ENCODE measurements at regions of chr11 and their contacts with region 1.

Region 1: DNA sequence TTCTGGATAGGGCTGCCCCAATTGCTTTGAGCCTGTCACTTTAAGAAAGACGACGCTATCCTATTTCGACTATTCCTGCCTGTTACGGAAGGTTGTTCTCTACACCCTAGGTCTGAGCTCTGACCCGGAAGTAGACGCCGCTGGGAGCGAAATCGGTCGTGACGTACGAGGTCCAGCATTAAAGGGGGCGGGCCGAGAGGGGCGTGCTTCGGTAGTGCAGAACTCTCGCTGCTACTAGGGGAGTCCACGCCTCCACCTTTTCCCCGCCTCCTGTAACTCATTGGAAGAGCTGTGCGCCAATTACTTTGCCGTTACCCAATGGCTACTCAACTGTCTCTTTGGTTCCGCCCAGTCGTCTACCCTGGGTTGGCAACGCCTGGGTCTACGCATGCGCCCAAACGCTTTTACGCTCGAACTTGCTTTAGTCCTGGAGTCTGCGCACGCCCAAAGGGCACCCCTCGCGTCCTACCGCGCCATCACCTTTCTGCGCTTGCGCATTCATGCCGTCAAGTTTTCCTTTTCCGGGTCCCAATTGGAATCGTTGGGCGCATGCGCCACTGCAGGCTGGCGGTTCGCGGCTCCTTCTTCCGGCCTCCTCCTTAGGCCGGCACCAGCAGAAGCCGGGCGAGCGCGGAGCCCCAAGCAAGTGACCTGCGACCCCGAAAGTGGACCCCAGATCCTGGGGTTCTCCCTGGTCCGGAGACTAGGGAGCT is at the start of gene PCNX3:
- DNase-seq: peak; percentile 100
- H3K4me3 ChIP-seq: peak within 1 kb of the TSS; percentile 74 to 96
- H3K4me3 Mint-ChIP-seq: peak within 1 kb of the TSS; percentile 95 to 99 (median 96)
- H3K27ac ChIP-seq: peak within 1 kb of the TSS; percentile 96
- H3K27ac Mint-ChIP-seq: peak within 1 kb of the TSS; percentile 90 to 100 (median 99)
- H3K4me1 ChIP-seq: peaks cover 46% of the 10 kb centered on the region
- H3K4me1 Mint-ChIP-seq: peaks cover 23 to 59% (median 46%) of the 10 kb centered on the region in 4 donors
- H3K27me3 ChIP-seq: no peaks in the 10 kb centered on the region
- H3K27me3 Mint-ChIP-seq: no peaks in the 10 kb centered on the region
- total RNA-seq, gene PCNX3: 63.3 to 66.3 TPM

Region 2: GRCh38 chr11:65418711-65419459 is 196.5 kb before region 1 on chr11:
- CTCF ChIA-PET with region 1: no interaction called
- POLR2A ChIA-PET with region 1: interaction called, 22 read pairs
- intact Hi-C with region 1: no loop called
- DNase-seq: peak; percentile 64 to 87 (median 70)
- H3K4me3 ChIP-seq: peak overlapping the region; percentile 86 to 95
- H3K4me3 Mint-ChIP-seq: peak overlapping the region; percentile 92 to 97 (median 95)
- H3K27ac ChIP-seq: peak overlapping the region; percentile 98
- H3K27ac Mint-ChIP-seq: peak overlapping the region; percentile 93 to 100 (median 97)
- H3K4me1 ChIP-seq: peaks cover 57% of the 10 kb centered on the region
- H3K4me1 Mint-ChIP-seq: peaks cover 30 to 72% (median 42%) of the 10 kb centered on the region in 4 donors
- H3K27me3 ChIP-seq: no peaks in the 10 kb centered on the region
- H3K27me3 Mint-ChIP-seq: peaks cover 0 to 4% of the 10 kb centered on the region in 2 donors

Region 3: DNA sequence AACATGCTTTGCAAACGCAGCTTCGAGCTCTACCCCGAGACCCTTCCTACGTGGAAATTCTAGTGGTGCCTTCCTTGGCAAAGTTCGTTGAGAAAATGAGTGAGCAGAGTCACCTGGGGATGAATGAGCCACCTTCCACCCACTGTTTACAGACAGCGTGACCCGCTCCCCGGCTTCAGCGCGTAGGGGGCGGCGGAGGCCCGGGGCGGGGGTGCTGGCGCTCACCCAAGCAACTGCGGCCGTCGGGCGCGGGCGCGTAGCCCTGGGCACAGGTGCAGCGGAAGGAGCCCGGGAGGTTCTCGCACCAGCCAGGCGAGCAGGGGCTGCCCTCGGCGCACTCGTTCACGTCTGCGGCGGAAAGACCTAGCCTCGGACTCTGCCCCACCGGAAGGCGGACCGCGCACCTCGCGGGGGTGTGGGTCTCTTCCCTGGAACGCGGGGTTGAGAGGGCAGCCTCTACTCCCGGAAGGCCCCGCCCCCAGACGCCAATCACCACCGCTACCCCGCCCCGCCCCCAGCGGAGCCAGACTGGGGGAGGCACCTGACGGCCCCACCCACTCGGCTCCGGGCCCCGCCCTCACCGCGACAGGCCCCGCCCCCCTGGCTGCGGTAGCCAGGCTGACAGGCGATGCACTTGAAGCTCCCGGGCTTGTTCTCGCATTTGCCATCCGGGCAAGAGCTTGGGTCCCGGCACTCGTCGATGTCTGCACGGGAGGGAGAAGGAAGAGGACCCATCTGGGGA is 69.0 kb before region 1 on chr11:
- CTCF ChIA-PET with region 1: interaction called, 7 read pairs
- POLR2A ChIA-PET with region 1: interaction called, 22 read pairs
- intact Hi-C with region 1: no loop called
- DNase-seq: peak; percentile 96 to 99 (median 97)
- H3K4me3 ChIP-seq: peak overlapping the region in 1 of 2 donors; percentile 41
- H3K4me3 Mint-ChIP-seq: peak overlapping the region; percentile 79 to 92 (median 80)
- H3K27ac ChIP-seq: peak overlapping the region; percentile 59
- H3K27ac Mint-ChIP-seq: peak overlapping the region; percentile 81 to 97 (median 94)
- H3K4me1 ChIP-seq: peaks cover 46% of the 10 kb centered on the region
- H3K4me1 Mint-ChIP-seq: peaks cover 31 to 65% (median 43%) of the 10 kb centered on the region in 4 donors
- H3K27me3 ChIP-seq: no peaks in the 10 kb centered on the region
- H3K27me3 Mint-ChIP-seq: no peaks in the 10 kb centered on the region

Region 4: GRCh38 chr11:65637794-65638317 is 22.5 kb after region 1 on chr11 and contains the start of gene SIPA1:
- CTCF ChIA-PET with region 1: interaction called, 3 read pairs
- POLR2A ChIA-PET with region 1: interaction called, 113 read pairs
- intact Hi-C with region 1: loop called (anchors 1 kb)
- DNase-seq: peak; percentile 63 to 85 (median 74)
- H3K4me3 ChIP-seq: peak within 1 kb of the TSS; percentile 72 to 86
- H3K4me3 Mint-ChIP-seq: peak within 1 kb of the TSS; percentile 90 to 98 (median 96)
- H3K27ac ChIP-seq: peak within 1 kb of the TSS; percentile 94
- H3K27ac Mint-ChIP-seq: peak within 1 kb of the TSS; percentile 97 to 100 (median 99)
- H3K4me1 ChIP-seq: peaks cover 71% of the 10 kb centered on the region
- H3K4me1 Mint-ChIP-seq: peaks cover 24 to 68% (median 46%) of the 10 kb centered on the region in 4 donors
- H3K27me3 ChIP-seq: no peaks in the 10 kb centered on the region
- H3K27me3 Mint-ChIP-seq: no peaks in the 10 kb centered on the region
- total RNA-seq, gene SIPA1: 150 to 169 TPM

Region 5: DNA sequence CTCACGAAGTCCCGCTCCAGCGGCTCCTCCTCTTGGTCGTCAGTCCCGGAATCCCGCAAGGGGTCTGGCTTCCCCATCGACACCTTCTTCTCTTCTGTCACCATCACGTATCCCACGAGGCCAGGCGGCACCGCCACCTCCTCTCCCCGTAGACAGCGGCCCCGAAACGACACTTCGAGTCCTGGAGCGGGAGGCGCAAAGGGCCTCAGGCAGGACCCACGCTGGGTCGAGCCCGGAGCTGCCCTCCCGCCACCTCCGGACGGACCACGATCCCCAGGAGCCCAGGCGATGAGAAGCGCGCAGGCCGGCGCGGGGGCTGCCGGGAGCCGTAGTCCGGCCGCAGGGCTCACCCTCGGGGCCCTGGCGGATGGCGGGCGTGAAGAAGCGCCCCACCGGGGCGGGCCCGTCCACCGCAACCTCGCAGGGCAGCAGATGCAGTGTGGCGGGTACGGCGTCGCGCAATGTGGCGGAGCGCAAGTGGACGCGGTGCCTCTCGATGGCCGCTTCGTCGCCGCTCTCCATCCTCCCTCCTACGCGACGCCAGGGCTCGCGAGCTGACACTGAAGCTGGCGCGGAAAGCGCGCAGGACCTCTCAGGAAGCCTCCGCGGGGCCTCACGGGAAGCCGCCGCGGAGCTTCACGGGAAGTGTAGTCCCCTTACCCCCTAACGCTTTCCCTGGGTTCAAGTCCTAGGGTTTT is 105.0 kb after region 1 on chr11 and contains the start of gene RNASEH2C:
- CTCF ChIA-PET with region 1: no interaction called
- POLR2A ChIA-PET with region 1: interaction called, 11 read pairs
- intact Hi-C with region 1: no loop called
- DNase-seq: peak; percentile 70 to 79 (median 76)
- H3K4me3 ChIP-seq: peak within 1 kb of the TSS; percentile 86 to 87
- H3K4me3 Mint-ChIP-seq: peak within 1 kb of the TSS; percentile 89 to 93 (median 91)
- H3K27ac ChIP-seq: peak within 1 kb of the TSS; percentile 68
- H3K27ac Mint-ChIP-seq: peak within 1 kb of the TSS; percentile 85 to 94 (median 92)
- H3K4me1 ChIP-seq: peaks cover 24% of the 10 kb centered on the region
- H3K4me1 Mint-ChIP-seq: peaks cover 16 to 43% (median 29%) of the 10 kb centered on the region in 4 donors
- H3K27me3 ChIP-seq: no peaks in the 10 kb centered on the region
- H3K27me3 Mint-ChIP-seq: no peaks in the 10 kb centered on the region
- total RNA-seq, gene RNASEH2C: 69.1 to 69.7 TPM

Region 6: GRCh38 chr11:65810046-65810868 is 194.9 kb after region 1 on chr11:
- CTCF ChIA-PET with region 1: no interaction called
- POLR2A ChIA-PET with region 1: no interaction called
- intact Hi-C with region 1: no loop called
- DNase-seq: no peak
- H3K4me3 ChIP-seq: no peak overlapping the region
- H3K4me3 Mint-ChIP-seq: peak overlapping the region in 1 of 8 donors; percentile 33
- H3K27ac ChIP-seq: no peak overlapping the region
- H3K27ac Mint-ChIP-seq: peak overlapping the region in 1 of 7 donors; percentile 22
- H3K4me1 ChIP-seq: no peaks in the 10 kb centered on the region
- H3K4me1 Mint-ChIP-seq: peaks cover 0 to 1% (median 0%) of the 10 kb centered on the region in 4 donors
- H3K27me3 ChIP-seq: no peaks in the 10 kb centered on the region
- H3K27me3 Mint-ChIP-seq: peaks cover 4 to 7% of the 10 kb centered on the region in 2 donors

Region 7: DNA sequence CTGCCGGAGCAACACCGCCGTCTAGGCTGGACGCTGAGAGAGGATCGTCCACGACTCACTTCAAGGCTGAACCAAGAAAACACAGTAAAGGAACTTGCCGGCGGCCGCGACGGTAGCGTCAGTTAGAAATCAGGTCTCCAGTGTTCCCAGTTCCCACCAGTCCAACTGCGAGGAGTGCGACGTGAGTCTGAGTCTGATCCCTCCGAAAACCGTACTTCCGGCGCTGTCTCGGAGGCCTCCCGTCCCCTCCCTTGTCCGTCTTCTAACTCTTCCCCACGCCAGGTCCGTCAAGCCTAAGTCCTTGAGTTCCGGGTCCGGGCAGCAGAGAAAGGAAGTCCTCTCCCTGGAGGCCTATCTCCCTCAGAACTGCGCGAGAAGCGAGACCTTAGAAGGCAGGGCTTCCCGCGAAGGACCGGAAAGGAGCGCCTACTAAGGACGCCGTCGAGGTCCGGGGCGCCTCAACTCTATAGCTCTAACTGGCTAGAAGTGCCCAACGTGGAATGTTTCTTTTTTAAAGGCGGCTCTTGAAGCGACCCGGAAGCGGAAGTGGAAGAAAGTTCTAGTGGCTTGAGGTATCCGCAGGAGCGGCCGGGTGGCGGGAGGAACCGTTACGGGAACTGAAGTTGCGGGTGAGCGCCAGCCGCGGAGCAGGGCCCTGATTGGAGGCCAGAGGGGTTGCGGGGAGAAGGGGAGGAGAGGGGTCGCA is 386.7 kb after region 1 on chr11 and contains the starts of genes BANF1 and EIF1AD:
- CTCF ChIA-PET with region 1: no interaction called
- POLR2A ChIA-PET with region 1: interaction called, 12 read pairs
- intact Hi-C with region 1: loop called (anchors 1 kb)
- DNase-seq: peak; percentile 95 to 97 (median 96)
- H3K4me3 ChIP-seq: peak within 1 kb of the TSS; percentile 68 to 82
- H3K4me3 Mint-ChIP-seq: peak within 1 kb of the TSS; percentile 94 to 100 (median 99)
- H3K27ac ChIP-seq: peak within 1 kb of the TSS; percentile 87
- H3K27ac Mint-ChIP-seq: peak within 1 kb of the TSS; percentile 96 to 99 (median 99)
- H3K4me1 ChIP-seq: peaks cover 26% of the 10 kb centered on the region
- H3K4me1 Mint-ChIP-seq: peaks cover 12 to 49% (median 27%) of the 10 kb centered on the region in 4 donors
- H3K27me3 ChIP-seq: no peaks in the 10 kb centered on the region
- H3K27me3 Mint-ChIP-seq: no peaks in the 10 kb centered on the region
- total RNA-seq, gene BANF1: 90.8 to 92.9 TPM
- total RNA-seq, gene EIF1AD: 60.2 to 65.4 TPM